Activated B cell treated with CpG ODN at 0.5 μM for 24 hours (primary cell): ENCODE measurements at regions of chr3 and their contacts with region 1.

Region 1: DNA sequence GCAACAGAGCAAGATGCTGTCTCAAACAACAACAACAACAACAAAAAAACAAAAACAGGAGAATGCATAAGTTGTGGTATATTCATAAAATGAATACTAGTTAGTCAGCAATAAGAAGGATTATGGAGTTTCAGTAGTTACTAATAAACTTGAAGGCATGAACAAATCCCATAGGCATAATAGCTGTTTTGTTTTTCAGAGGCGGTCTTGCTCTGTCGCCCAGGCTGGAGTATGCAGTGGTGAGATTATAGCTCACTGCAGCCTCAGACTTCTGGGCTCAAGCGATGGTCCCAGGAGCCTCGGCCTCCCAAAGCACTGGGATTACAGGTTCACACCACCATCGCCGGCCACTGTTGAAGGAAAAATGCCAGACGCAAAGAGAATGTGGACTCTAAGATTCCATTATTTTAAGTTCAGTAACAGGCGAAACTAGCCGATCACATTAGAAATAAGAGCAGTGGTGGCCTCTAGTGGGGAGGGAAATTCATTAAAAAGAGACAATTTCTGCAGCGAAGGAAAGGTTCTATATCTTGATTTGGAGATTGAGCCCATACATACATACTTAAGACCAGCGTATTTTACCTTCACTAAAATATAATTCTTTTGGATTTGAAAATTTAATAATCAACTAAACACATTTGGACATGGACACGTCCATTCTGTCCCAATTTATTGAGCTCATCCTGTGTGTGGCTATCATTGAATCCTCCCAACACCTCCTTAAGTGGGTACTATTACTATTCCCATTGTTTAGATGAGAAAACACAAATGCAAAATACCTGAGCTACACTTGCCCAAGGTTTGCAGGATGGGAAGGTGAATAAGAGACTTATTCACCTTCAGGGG is 27.4 kb upstream of the HDAC11 start:
- DNase-seq: peak; percentile 28
- ATAC-seq: no peak
- H3K4me3 Mint-ChIP-seq: peak overlapping the region; percentile 84
- H3K27ac Mint-ChIP-seq: peak overlapping the region; percentile 89
- H3K4me1 Mint-ChIP-seq: peaks cover 18% of the 10 kb centered on the region
- H3K27me3 Mint-ChIP-seq: no peaks in the 10 kb centered on the region
- CTCF ChIP-seq: no peak

Region 2: DNA sequence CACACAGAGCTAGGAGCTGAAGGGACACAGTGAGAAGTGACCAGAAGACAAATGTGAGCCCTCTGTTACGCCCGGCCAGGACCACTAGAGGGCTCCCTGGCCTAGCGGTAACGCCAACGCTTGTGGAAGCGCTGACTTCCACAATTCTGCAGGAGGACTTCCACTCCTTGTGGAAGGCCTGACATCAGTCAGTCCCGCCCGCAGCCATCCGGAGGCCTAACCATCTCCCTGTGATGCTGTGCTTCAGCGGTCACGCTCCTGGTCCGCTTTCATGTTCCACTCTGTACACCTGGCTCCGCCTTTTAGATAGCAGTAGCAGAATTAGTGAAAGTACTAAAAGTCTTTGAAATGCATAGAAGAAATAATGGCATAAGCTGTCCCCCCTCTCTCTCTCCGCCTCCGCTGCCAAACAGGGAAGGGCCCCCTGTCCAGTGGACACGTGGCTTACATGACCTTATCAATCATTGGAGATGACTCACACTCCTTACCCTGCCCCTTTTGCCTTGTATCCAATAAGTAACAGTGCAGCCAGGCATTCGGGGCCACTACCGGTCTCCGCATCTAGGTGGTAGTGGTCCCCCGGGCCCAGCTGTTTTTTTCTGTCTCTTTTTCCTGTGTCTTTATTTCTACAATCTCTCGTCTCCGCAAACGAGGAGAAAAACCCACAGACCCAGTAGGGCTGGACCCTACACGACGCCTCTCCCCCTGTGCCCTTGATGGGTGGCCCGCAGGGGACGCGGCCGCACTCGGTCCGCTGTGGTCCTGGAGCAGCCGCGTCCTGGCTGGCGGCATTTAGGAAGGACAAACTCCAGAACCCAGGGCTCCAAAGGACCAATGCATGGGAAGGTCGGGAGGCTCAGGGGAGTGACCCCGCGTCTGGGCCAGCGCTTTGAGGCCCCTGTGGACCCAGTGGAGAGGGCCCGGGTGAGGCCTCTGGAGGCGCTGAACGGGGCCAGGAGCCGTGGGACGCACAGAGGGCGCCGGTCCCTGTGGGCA is 584.4 kb before region 1 on chr3:
- CTCF ChIA-PET with region 1: interaction called, 3 read pairs
- POLR2A ChIA-PET with region 1: interaction called, 3 read pairs
- intact Hi-C with region 1: loop called (anchors 5 kb)
- DNase-seq: peak; percentile 59
- ATAC-seq: peak; percentile 81
- H3K4me3 Mint-ChIP-seq: peak overlapping the region; percentile 79
- H3K27ac Mint-ChIP-seq: peak overlapping the region; percentile 25
- H3K4me1 Mint-ChIP-seq: peaks cover 25% of the 10 kb centered on the region
- H3K27me3 Mint-ChIP-seq: peaks cover 3% of the 10 kb centered on the region
- CTCF ChIP-seq: peak; percentile 67

Region 3: DNA sequence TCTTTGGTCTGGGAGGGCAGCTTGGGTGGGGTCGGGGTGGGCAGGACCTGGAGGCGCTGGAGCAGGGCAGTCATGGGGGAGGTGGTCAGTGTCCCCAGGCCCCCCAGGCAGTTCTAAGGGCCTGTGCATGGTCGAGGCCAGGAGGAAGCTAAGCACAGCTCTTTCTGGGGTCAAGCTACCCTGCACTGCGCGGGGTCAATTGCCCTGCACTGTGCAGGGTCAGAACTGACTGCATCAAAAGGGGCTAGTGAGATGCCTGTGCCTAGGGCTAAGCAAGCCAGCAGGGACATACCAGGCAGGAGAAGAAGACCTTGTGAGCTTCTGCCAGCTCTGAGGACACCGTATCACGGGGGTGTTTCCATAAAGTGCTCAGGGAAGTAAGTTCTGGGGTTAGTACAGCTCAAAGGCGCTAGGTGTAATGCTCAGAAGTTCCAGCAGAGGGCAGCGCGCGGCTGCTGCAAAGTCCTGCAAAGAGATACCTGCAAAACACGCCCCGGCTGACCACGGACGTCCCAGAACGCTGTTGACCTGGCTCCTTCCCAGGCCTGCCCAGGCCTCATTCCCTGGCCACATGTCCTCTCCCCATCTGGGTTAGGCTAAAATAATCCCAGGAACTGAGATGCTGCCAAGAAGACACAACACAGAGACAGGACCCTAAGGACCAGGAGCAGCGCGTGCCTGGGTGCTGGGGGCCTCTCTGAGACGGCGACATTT is 360.7 kb before region 1 on chr3:
- CTCF ChIA-PET with region 1: interaction called, 76 read pairs
- POLR2A ChIA-PET with region 1: interaction called, 7 read pairs
- intact Hi-C with region 1: loop called (anchors 1 kb)
- DNase-seq: peak; percentile 80
- ATAC-seq: peak; percentile 49
- H3K4me3 Mint-ChIP-seq: no peak overlapping the region
- H3K27ac Mint-ChIP-seq: peak overlapping the region; percentile 35
- H3K4me1 Mint-ChIP-seq: peaks cover 71% of the 10 kb centered on the region
- H3K27me3 Mint-ChIP-seq: peaks cover 10% of the 10 kb centered on the region
- CTCF ChIP-seq: peak; percentile 33

Region 4: DNA sequence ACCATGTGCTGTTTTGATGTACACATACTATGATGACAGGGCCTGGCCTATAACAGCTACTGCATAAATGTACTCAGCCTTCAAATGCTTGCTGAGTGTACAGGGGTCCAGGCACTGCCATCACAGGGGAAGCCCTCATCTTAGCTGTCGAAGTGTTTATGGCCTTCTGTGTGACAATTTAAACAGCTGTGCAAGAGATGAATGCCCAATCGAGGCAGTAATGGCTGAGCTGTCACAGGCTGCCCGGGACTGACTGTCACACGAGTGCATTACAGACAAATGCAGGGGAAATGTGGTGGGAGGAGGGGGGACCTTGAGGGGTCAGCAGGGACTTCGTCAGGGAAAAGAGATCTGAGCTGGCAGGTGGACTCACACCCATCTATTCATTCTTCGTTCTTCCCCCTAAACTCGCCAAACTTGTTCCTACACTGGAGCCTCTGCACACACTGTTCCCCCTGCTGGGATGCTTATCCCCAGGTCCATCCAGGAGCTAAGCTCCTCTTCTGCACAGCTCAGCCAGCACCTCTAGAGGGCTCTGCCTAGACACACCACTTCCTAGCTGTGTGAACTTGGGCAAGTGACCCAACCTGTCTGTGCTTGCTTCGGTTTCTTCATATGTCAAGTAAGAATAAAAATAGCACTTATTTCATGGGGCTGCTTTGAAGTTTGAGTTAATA is 223.3 kb before region 1 on chr3:
- CTCF ChIA-PET with region 1: interaction called, 5 read pairs
- POLR2A ChIA-PET with region 1: no interaction called
- intact Hi-C with region 1: loop called (anchors 2 kb)
- DNase-seq: no peak
- ATAC-seq: no peak
- H3K4me3 Mint-ChIP-seq: no peak overlapping the region
- H3K27ac Mint-ChIP-seq: no peak overlapping the region
- H3K4me1 Mint-ChIP-seq: peaks cover 14% of the 10 kb centered on the region
- H3K27me3 Mint-ChIP-seq: peaks cover 2% of the 10 kb centered on the region
- CTCF ChIP-seq: no peak

Region 5: DNA sequence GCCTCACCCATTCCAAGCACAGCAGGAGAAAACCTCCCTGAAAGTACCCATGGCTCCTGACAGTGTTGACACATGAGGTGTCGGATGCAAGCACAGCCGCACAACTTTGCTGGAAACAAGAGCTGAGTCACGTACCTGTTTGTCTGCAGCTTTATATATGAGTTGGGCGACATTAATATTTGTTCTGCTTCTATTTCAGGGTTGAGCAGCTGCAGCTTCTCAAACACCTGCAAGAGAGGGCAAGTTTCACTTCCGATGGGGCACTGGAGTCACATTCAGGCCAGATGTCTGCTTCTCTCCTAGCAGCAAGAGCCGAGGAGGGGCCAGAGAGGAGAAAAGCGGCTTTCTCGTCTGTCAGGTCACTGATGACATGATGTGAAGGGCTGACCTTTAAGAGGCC is 120.6 kb before region 1 on chr3:
- CTCF ChIA-PET with region 1: interaction called, 7 read pairs
- POLR2A ChIA-PET with region 1: interaction called, 18 read pairs
- intact Hi-C with region 1: loop called (anchors 1 kb)
- DNase-seq: peak; percentile 48
- ATAC-seq: peak; percentile 91
- H3K4me3 Mint-ChIP-seq: peak overlapping the region; percentile 56
- H3K27ac Mint-ChIP-seq: peak overlapping the region; percentile 88
- H3K4me1 Mint-ChIP-seq: peaks cover 39% of the 10 kb centered on the region
- H3K27me3 Mint-ChIP-seq: no peaks in the 10 kb centered on the region
- CTCF ChIP-seq: no peak

Region 6: GRCh38 chr3:13391308-13391707 is 61.4 kb before region 1 on chr3:
- CTCF ChIA-PET with region 1: interaction called, 77 read pairs
- POLR2A ChIA-PET with region 1: interaction called, 3 read pairs
- intact Hi-C with region 1: loop called (anchors 1 kb)
- DNase-seq: no peak
- ATAC-seq: no peak
- H3K4me3 Mint-ChIP-seq: no peak overlapping the region
- H3K27ac Mint-ChIP-seq: no peak overlapping the region
- H3K4me1 Mint-ChIP-seq: no peaks in the 10 kb centered on the region
- H3K27me3 Mint-ChIP-seq: no peaks in the 10 kb centered on the region
- CTCF ChIP-seq: no peak

Region 7: GRCh38 chr3:13479581-13480339 is 27.0 kb after region 1 on chr3 and contains the start of gene HDAC11:
- CTCF ChIA-PET with region 1: interaction called, 13 read pairs
- POLR2A ChIA-PET with region 1: interaction called, 33 read pairs
- intact Hi-C with region 1: loop called (anchors 1 kb)
- DNase-seq: peak; percentile 97
- ATAC-seq: peak; percentile 97
- H3K4me3 Mint-ChIP-seq: peak within 1 kb of the TSS; percentile 90
- H3K27ac Mint-ChIP-seq: peak within 1 kb of the TSS; percentile 79
- H3K4me1 Mint-ChIP-seq: peaks cover 2% of the 10 kb centered on the region
- H3K27me3 Mint-ChIP-seq: peaks cover under 1% of the 10 kb centered on the region
- CTCF ChIP-seq: no peak
- total RNA-seq, gene HDAC11: 1.6 and 2.5 TPM in 2 replicates

Region 8: GRCh38 chr3:13657660-13658435 is 205.1 kb after region 1 on chr3:
- CTCF ChIA-PET with region 1: no interaction called
- POLR2A ChIA-PET with region 1: no interaction called
- intact Hi-C with region 1: no loop called
- DNase-seq: peak; percentile 46
- ATAC-seq: peak; percentile 86
- H3K4me3 Mint-ChIP-seq: no peak overlapping the region
- H3K27ac Mint-ChIP-seq: no peak overlapping the region
- H3K4me1 Mint-ChIP-seq: peaks cover 4% of the 10 kb centered on the region
- H3K27me3 Mint-ChIP-seq: peaks cover 43% of the 10 kb centered on the region
- CTCF ChIP-seq: no peak